Sigmoid colon (tissue), 7 donors: ENCODE measurements at regions of chr14 and their contacts with region 1.

Region 1: DNA sequence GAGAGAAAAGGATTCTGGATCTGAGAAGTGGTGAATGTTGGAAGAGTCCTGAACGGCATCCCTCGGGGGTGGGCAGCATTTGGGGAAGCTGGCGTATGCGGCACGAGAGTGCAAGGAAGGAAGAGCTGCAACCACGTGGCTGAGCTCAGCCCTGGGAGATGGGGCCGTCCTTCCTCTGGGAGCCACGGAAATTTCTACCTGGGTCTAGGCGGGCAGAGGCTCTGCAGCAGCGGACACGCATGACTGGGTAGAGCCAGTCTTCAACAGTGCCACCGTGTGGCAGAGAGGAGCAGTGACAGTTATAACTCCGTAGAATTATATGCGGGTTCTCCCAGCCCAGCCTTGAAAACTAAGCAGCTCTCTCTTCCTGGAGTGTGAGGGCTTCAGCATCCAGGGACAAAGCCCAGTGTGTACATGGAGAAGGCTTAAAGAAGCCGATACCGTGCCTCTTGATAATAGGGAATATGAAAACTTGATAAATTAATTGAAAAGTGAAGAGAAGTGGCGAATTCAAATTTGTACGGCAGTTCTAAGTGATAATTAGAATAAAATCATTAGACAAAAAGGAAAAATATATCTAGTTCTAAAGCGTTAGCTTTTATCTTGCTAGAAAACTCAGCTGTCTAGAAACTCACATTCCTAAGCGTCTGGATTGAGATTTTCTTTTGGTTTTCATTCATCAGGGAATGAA is 82.9 kb upstream of the STXBP6 start:
- DNase-seq: peak; percentile 82
- H3K4me3 ChIP-seq: no peak overlapping the region
- H3K27ac ChIP-seq: no peak overlapping the region
- H3K4me1 ChIP-seq: peaks cover 0 to 6% (median 2%) of the 10 kb centered on the region in 4 donors
- H3K27me3 ChIP-seq: peaks cover 0 to 23% (median 0%) of the 10 kb centered on the region in 3 donors
- CTCF ChIP-seq: peak; percentile 54 to 84 (median 70)
- EP300 ChIP-seq: no peak
- POLR2A ChIP-seq: no peak

Region 2: DNA sequence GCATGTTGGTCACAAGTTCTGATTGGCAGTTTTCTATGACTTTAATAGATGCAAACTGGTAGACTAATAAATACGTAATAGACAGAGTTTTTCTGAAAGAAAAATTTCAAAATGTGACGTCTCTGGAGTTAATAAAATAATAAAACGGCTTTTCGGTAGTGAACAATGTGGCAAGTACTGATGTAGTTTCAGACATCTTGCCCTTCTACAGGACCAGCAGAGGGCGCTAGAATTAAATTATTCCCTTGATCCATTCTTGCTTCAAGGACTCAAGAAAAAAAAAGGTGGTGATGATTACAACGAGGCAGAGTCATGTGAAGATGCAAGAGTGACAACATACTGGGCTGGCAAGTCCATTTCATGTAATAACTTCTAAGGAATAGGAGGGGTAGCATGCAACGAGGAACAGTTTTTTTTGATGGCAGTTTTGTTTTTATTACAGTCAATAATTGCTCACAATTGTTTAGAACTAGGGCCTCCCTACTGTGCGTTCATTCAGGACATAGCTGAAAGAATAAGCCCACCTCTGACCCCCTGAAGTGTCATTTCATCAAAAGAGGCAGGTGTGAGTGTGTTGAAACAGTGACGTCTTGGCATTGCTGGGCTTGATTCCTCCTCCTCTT is 397.9 kb before region 1 on chr14:
- intact Hi-C with region 1: loop called (anchors 2 kb)
- DNase-seq: no peak
- H3K4me3 ChIP-seq: no peak overlapping the region
- H3K27ac ChIP-seq: no peak overlapping the region
- H3K4me1 ChIP-seq: no peaks in the 10 kb centered on the region
- H3K27me3 ChIP-seq: no peaks in the 10 kb centered on the region
- CTCF ChIP-seq: peak in 3 of 4 experiments; percentile 39 to 68 (median 49)
- EP300 ChIP-seq: no peak
- POLR2A ChIP-seq: no peak

Region 3: GRCh38 chr14:24806061-24806678 is 326.7 kb before region 1 on chr14:
- intact Hi-C with region 1: loop called (anchors 1 kb)
- DNase-seq: peak; percentile 74
- H3K4me3 ChIP-seq: no peak overlapping the region
- H3K27ac ChIP-seq: peak overlapping the region in 1 of 4 donors; percentile 11
- H3K4me1 ChIP-seq: peaks cover 0 to 17% (median 2%) of the 10 kb centered on the region in 4 donors
- H3K27me3 ChIP-seq: no peaks in the 10 kb centered on the region
- CTCF ChIP-seq: peak; percentile 46 to 89 (median 78)
- EP300 ChIP-seq: no peak
- POLR2A ChIP-seq: no peak

Region 4: GRCh38 chr14:25049568-25050268 is 83.2 kb before region 1 on chr14 and contains the start of gene STXBP6:
- intact Hi-C with region 1: loop called (anchors 5 kb)
- DNase-seq: peak; percentile 89
- H3K4me3 ChIP-seq: peak within 1 kb of the TSS; percentile 72 to 84 (median 78)
- H3K27ac ChIP-seq: peak within 1 kb of the TSS; percentile 80 to 93 (median 86)
- H3K4me1 ChIP-seq: peaks cover 0 to 34% (median 14%) of the 10 kb centered on the region in 4 donors
- H3K27me3 ChIP-seq: no peaks in the 10 kb centered on the region
- CTCF ChIP-seq: no peak
- EP300 ChIP-seq: no peak
- POLR2A ChIP-seq: no peak
- total RNA-seq, gene STXBP6: 7.1 to 16.1 (median 14.8) TPM